Ovary (tissue), 10 donors: ENCODE measurements at regions of chr21 and their contacts with region 1.

Region 1: DNA sequence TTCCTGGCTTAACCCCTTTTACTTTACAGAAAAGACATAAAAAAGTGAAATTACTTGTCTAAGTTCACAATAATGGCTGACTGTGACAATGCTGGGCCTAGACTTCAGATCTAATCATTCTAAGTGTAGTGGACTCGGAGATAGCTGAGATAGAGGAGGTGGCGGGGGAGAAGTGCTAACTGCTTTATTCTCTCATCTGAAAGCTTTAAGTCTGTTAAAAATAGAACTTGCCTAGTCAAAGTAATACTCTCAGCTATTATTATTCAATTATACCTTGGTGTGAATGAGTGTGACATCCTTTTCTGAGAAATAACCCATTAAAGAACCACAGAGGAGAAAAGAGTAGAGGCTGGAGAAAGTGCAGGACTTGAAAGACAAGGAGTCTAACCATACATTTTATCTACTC is 96.1 kb upstream of the OLIG2 start:
- DNase-seq: no peak
- H3K4me3 ChIP-seq: no peak overlapping the region
- H3K27ac ChIP-seq: no peak overlapping the region
- H3K4me1 ChIP-seq: no peaks in the 10 kb centered on the region
- H3K27me3 ChIP-seq: no peaks in the 10 kb centered on the region
- CTCF ChIP-seq: no peak
- EP300 ChIP-seq: no peak
- POLR2A ChIP-seq: no peak

Region 2: GRCh38 chr21:31558962-31559367 is 1370.7 kb before region 1 on chr21:
- intact Hi-C with region 1: no loop called
- DNase-seq: peak; percentile 66 to 92 (median 81)
- H3K4me3 ChIP-seq: peak overlapping the region; percentile 39
- H3K27ac ChIP-seq: no peak overlapping the region
- H3K4me1 ChIP-seq: peaks cover 6% of the 10 kb centered on the region
- H3K27me3 ChIP-seq: no peaks in the 10 kb centered on the region
- CTCF ChIP-seq: peak in 1 of 3 donors; percentile 42
- EP300 ChIP-seq: no peak
- POLR2A ChIP-seq: no peak

Region 3: GRCh38 chr21:32727687-32728455 is 201.8 kb before region 1 on chr21 and contains the start of gene SYNJ1:
- intact Hi-C with region 1: no loop called
- DNase-seq: peak; percentile 93 to 97 (median 95)
- H3K4me3 ChIP-seq: peak within 1 kb of the TSS; percentile 99
- H3K27ac ChIP-seq: peak within 1 kb of the TSS; percentile 14 to 79
- H3K4me1 ChIP-seq: peaks cover 8% of the 10 kb centered on the region
- H3K27me3 ChIP-seq: no peaks in the 10 kb centered on the region
- CTCF ChIP-seq: no peak
- EP300 ChIP-seq: no peak
- POLR2A ChIP-seq: peak; percentile 66
- total RNA-seq, gene SYNJ1: 7.0 to 15.6 (median 11.1) TPM

Region 4: DNA sequence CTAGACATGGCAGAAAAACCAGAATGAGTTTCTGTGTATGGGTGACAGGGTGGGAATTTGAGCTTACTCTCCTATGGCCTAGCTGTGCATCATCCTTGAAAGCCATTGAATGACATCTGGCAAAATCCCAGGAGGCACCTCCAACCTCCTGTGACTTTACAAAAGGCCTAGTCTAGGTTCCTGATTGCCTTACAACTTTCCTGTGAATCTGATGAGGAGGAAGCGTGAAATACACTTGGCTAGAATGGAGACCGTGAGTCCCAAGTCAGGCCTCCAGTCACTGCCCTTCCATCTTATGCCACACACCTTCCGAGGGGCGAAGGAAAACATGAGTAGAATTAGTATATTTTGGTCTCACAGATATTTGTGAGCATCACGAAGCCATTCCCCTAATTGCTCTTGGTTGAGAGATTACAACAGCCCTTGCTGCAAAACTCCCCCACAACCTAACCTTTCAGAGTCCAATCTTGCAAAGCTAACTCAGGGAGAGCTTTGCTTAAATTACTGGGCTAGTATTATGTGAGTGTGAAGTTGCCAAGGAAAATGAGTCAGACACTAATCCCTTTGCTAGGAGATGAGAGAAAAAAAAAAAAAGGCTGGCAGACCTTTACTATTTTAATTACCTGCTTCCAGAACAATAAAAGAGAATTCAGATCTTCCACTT is 121.8 kb before region 1 on chr21:
- intact Hi-C with region 1: no loop called
- DNase-seq: peak in 1 of 5 donors; percentile 48
- H3K4me3 ChIP-seq: no peak overlapping the region
- H3K27ac ChIP-seq: peak overlapping the region in 1 of 2 donors; percentile 43
- H3K4me1 ChIP-seq: peaks cover 21% of the 10 kb centered on the region
- H3K27me3 ChIP-seq: no peaks in the 10 kb centered on the region
- CTCF ChIP-seq: no peak
- EP300 ChIP-seq: no peak
- POLR2A ChIP-seq: no peak

Region 5: GRCh38 chr21:33451634-33452071 is 522.0 kb after region 1 on chr21:
- intact Hi-C with region 1: loop called in 1 of 4 experiments (anchors 10 kb)
- DNase-seq: no peak
- H3K4me3 ChIP-seq: no peak overlapping the region
- H3K27ac ChIP-seq: no peak overlapping the region
- H3K4me1 ChIP-seq: no peaks in the 10 kb centered on the region
- H3K27me3 ChIP-seq: no peaks in the 10 kb centered on the region
- CTCF ChIP-seq: no peak
- EP300 ChIP-seq: no peak
- POLR2A ChIP-seq: no peak